Heart left ventricle (tissue), 16 donors: ENCODE measurements at regions of chr7 and their contacts with region 1.

Region 1: GRCh38 chr7:74183613-74184450 is 9.7 kb downstream of the EIF4H start:
- DNase-seq: no peak
- ATAC-seq: peak in 2 of 4 donors; percentile 17 to 23
- H3K4me3 ChIP-seq: no peak overlapping the region
- H3K27ac ChIP-seq: peak overlapping the region in 3 of 12 donors; percentile 25 to 40 (median 32)
- H3K4me1 ChIP-seq: peaks cover 16 to 97% (median 86%) of the 10 kb centered on the region in 12 donors
- H3K27me3 ChIP-seq: no peaks in the 10 kb centered on the region
- CTCF ChIP-seq: peak in 3 of 12 donors; percentile 5 to 35 (median 14)
- POLR2A ChIP-seq: no peak

Region 2: DNA sequence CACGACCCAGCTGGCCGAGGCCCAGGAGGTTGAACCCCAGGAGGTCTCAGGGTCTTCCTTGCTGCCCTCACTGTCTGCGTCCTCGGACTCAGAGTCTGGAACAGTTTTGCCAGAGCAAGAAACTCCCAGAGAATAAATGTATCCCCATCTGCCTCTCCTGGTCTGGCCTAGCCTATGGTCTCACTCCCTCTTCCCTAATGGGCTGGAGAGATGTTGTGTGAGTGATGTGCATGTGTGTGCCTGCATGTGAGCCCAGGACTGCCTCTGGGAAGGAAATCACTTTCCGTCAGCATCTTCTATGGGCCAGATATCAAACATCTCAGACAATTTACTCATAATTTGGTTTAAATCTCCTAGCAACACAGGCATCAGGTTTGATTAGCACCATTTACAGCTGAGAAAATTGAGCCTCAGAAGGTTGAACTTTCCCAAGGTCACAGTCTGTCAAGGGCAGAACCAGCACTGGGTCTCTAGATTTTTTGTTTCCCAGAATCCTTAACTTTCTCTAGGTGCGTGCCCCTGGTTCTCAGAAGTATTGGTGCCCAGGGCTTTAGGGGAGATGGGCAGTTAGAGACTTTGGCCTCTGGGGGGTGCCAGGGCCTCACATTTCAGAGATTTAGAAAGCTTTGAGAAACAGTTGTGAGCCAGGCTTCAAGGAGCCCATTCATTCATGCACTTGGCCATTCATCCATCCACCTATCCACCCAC is 317.9 kb before region 1 on chr7:
- intact Hi-C with region 1: loop called in 3 of 10 experiments (anchors 10 kb)
- DNase-seq: peak in 1 of 5 donors; percentile 57
- ATAC-seq: peak; percentile 39 to 77 (median 76)
- H3K4me3 ChIP-seq: no peak overlapping the region
- H3K27ac ChIP-seq: no peak overlapping the region
- H3K4me1 ChIP-seq: peaks cover 0 to 17% (median 8%) of the 10 kb centered on the region in 12 donors
- H3K27me3 ChIP-seq: no peaks in the 10 kb centered on the region
- CTCF ChIP-seq: peak; percentile 55 to 77 (median 68)
- POLR2A ChIP-seq: no peak

Region 3: GRCh38 chr7:73992101-73992562 is 191.7 kb before region 1 on chr7:
- intact Hi-C with region 1: no loop called
- DNase-seq: peak in 2 of 5 donors; percentile 52 to 65
- ATAC-seq: peak; percentile 10 to 66 (median 54)
- H3K4me3 ChIP-seq: no peak overlapping the region
- H3K27ac ChIP-seq: peak overlapping the region in 4 of 12 donors; percentile 34 to 61 (median 56)
- H3K4me1 ChIP-seq: peaks cover 0 to 11% (median 0%) of the 10 kb centered on the region in 12 donors
- H3K27me3 ChIP-seq: no peaks in the 10 kb centered on the region
- CTCF ChIP-seq: no peak
- POLR2A ChIP-seq: no peak

Region 4: GRCh38 chr7:74061840-74062539 is 121.8 kb before region 1 on chr7:
- intact Hi-C with region 1: loop called in 1 of 10 experiments (anchors 10 kb)
- DNase-seq: peak; percentile 80 to 91 (median 84)
- ATAC-seq: peak; percentile 87 to 97 (median 92)
- H3K4me3 ChIP-seq: peak overlapping the region in 5 of 12 donors; percentile 13 to 33 (median 19)
- H3K27ac ChIP-seq: peak overlapping the region; percentile 31 to 89 (median 77)
- H3K4me1 ChIP-seq: peaks cover 0 to 20% (median 7%) of the 10 kb centered on the region in 12 donors
- H3K27me3 ChIP-seq: no peaks in the 10 kb centered on the region
- CTCF ChIP-seq: no peak
- POLR2A ChIP-seq: no peak

Region 5: GRCh38 chr7:74068393-74069085 is 115.3 kb before region 1 on chr7:
- intact Hi-C with region 1: loop called in 2 of 10 experiments (anchors 10 kb)
- DNase-seq: peak in 2 of 5 donors; percentile 42 to 58
- ATAC-seq: peak in 1 of 4 donors; percentile 37
- H3K4me3 ChIP-seq: no peak overlapping the region
- H3K27ac ChIP-seq: no peak overlapping the region
- H3K4me1 ChIP-seq: no peaks in the 10 kb centered on the region
- H3K27me3 ChIP-seq: no peaks in the 10 kb centered on the region
- CTCF ChIP-seq: no peak
- POLR2A ChIP-seq: no peak

Region 6: GRCh38 chr7:74284781-74285259 is 101.0 kb after region 1 on chr7:
- intact Hi-C with region 1: no loop called
- DNase-seq: no peak
- ATAC-seq: no peak
- H3K4me3 ChIP-seq: no peak overlapping the region
- H3K27ac ChIP-seq: no peak overlapping the region
- H3K4me1 ChIP-seq: peaks cover 0 to 28% (median 17%) of the 10 kb centered on the region in 12 donors
- H3K27me3 ChIP-seq: no peaks in the 10 kb centered on the region
- CTCF ChIP-seq: no peak
- POLR2A ChIP-seq: no peak

Region 7: DNA sequence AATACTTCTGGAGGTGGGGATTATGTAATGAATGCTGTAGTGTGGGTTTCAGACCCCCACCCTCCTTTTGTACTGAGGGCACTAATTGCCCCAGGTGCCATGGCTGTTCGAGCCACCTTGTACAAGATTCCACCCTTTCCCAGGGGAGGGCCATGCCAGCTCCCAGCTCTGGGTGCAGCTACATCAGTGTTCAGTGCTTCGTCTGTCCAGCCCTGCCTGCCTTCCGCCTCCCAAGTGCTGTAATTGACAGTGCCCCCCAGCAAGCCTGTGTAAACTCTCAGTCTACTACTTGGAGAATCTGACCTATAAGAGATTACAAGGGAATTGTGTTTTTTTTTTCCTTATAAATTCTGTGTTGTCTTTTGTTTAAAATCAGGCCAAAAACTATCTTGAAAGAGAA is 506.6 kb after region 1 on chr7:
- intact Hi-C with region 1: loop called in 1 of 10 experiments (anchors 5 kb)
- DNase-seq: no peak
- ATAC-seq: peak in 1 of 4 donors; percentile 29
- H3K4me3 ChIP-seq: no peak overlapping the region
- H3K27ac ChIP-seq: no peak overlapping the region
- H3K4me1 ChIP-seq: peaks cover 0 to 8% (median 0%) of the 10 kb centered on the region in 12 donors
- H3K27me3 ChIP-seq: no peaks in the 10 kb centered on the region
- CTCF ChIP-seq: no peak
- POLR2A ChIP-seq: no peak